ENCODE measurements at regions of chr1 and their contacts with region 1.

Region 1: DNA sequence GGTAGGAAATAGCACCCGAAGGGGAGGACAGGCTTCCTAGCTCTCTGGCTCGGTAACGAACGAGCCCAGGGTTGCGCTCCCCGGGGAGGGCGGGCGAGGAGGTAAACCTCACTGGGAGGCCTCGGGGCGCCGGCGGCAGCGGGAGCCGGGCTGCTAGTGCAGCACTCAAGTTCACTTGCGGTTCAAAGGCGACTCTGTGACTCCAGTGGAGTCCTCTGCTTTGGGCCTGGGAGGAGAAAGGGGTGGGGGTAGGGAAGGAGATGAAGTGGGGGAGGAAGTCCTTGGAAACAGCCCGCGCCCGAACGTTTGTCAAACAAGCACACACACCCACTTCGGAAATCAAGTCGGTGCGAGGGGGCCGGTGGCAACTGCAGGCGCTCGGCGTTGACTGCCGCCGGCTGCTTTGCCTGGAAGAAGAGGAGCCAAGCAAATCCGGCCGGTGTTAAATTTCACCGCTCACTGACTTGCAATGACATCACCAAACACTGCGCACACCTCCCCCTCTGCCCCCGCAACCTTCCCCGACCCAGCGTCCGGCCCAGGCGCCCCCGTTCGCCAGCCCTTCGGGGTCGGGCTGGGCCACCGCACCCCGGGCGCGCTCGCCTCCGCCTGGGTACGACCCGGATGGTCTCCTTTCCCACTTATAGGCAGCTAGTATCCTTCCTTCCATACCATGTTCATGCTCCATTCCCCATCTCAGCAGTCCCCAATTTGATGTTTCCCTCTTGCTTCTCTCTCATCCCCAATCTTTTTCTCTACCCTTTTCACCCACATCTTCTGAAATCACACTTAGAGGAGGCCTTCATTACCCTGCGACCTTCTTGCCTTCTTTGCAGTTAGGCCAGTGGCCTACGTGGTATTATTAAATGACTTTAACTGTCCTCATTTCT is at the start of gene COL24A1:
- DNase-seq: peak; percentile 30
- H3K4me3 ChIP-seq: peak within 1 kb of the TSS; percentile 39
- H3K27ac ChIP-seq: no peak within 1 kb of the TSS
- H3K4me1 ChIP-seq: peaks cover 10% of the 10 kb centered on the region
- H3K27me3 ChIP-seq: peaks cover 18% of the 10 kb centered on the region
- CTCF ChIP-seq: no peak
- total RNA-seq, gene COL24A1: 0.15 and 0.72 TPM in 2 replicates

Region 2: DNA sequence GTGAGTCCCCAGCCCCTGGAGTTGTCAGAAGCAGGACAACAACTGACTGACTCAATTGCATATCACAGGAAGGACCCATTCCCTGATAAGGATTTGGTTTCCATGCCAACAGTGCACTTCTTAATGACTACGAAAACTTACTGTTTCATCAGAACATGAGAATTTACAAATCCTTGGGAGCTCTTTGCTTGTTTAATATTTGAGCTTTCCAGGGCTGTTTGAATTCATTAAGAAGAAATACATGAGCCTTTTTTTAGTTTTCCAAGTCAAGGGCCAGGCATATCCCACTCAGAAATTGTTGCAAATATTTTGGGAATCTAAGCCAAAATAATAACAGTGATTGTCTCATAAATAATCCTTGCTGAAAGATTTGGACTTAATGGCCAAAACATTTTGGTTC is 27.0 kb after region 1 on chr1:
- CTCF ChIA-PET with region 1: no interaction called
- POLR2A ChIA-PET with region 1: interaction called, 10 read pairs
- intact Hi-C with region 1: no loop called
- DNase-seq: no peak
- H3K4me3 ChIP-seq: no peak overlapping the region
- H3K27ac ChIP-seq: no peak overlapping the region
- H3K4me1 ChIP-seq: no peaks in the 10 kb centered on the region
- H3K27me3 ChIP-seq: no peaks in the 10 kb centered on the region
- CTCF ChIP-seq: no peak

Region 3: GRCh38 chr1:86356247-86356646 is 199.4 kb after region 1 on chr1:
- CTCF ChIA-PET with region 1: no interaction called
- POLR2A ChIA-PET with region 1: no interaction called
- intact Hi-C with region 1: loop called (anchors 10 kb)
- DNase-seq: no peak
- H3K4me3 ChIP-seq: no peak overlapping the region
- H3K27ac ChIP-seq: no peak overlapping the region
- H3K4me1 ChIP-seq: no peaks in the 10 kb centered on the region
- H3K27me3 ChIP-seq: no peaks in the 10 kb centered on the region
- CTCF ChIP-seq: peak; percentile 41; the same call in 1 of the 2 replicates

Measured in A673 (cell line).